Tibial artery (tissue), 4 donors: ENCODE measurements at regions of chr12 and their contacts with region 1.

Region 1: GRCh38 chr12:6423267-6424007 is 21.3 kb upstream of the CD27 start:
- DNase-seq: peak; percentile 89 to 95
- H3K4me3 ChIP-seq: no peak overlapping the region
- H3K27ac ChIP-seq: no peak overlapping the region
- H3K4me1 ChIP-seq: peaks cover 0 to 18% (median 8%) of the 10 kb centered on the region in 4 donors
- H3K27me3 ChIP-seq: no peaks in the 10 kb centered on the region
- CTCF ChIP-seq: peak; percentile 91 to 95

Region 2: DNA sequence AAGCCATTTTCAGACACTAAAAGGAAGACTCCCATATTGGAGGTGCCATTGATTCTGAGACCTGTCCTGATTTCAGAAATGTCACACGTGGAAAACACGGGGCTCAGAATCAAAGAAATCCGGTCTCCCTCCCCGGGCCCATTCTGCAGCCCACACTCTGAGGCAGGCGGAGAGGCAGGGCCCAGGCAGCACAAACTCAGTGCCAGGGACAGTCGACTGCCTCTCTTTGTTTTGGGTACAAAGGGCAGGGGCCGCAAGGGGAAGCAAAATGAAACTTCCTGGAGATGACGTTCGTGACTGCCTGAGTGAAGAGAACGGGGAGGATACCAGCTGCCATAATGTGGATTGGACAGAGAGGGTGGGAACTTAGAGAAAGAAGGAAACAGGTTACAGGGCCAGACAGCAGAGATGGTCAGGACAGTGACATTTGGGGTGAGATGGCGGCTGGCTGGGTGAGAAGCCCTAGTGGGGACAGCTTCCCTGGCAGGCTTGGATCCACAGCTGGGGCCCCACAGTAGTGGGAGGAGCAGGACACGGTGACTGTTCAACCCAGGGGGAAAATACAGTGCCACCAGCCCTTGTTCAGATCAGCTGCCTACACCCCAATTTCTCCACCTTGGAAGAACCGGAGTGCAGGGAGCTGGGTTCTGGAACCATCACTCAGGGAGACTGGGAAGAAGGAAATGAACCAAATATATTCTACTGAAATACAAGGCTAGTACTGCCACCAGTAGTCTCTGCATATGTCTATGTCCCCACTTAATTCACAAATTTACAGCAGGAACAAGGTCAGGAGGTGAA is 119.0 kb after region 1 on chr12:
- intact Hi-C with region 1: loop called (anchors 2 kb)
- DNase-seq: no peak
- H3K4me3 ChIP-seq: no peak overlapping the region
- H3K27ac ChIP-seq: peak overlapping the region; percentile 68 to 76
- H3K4me1 ChIP-seq: peaks cover 0 to 27% (median 26%) of the 10 kb centered on the region in 4 donors
- H3K27me3 ChIP-seq: no peaks in the 10 kb centered on the region
- CTCF ChIP-seq: no peak